Activated CD8-positive, alpha-beta T cell treated with anti-CD3 and anti-CD28 coated beads for 36 hours (primary cell): ENCODE measurements at regions of chr6 and their contacts with region 1.

Region 1: GRCh38 chr6:2931970-2932748 is 29.1 kb upstream of the SERPINB9 start:
- DNase-seq: peak; percentile 94
- ATAC-seq: peak; percentile 90
- H3K4me3 Mint-ChIP-seq: no peak overlapping the region
- H3K27ac Mint-ChIP-seq: peak overlapping the region; percentile 67
- H3K4me1 Mint-ChIP-seq: peaks cover 27% of the 10 kb centered on the region
- H3K27me3 Mint-ChIP-seq: no peaks in the 10 kb centered on the region
- CTCF ChIP-seq: peak; percentile 96

Region 2: DNA sequence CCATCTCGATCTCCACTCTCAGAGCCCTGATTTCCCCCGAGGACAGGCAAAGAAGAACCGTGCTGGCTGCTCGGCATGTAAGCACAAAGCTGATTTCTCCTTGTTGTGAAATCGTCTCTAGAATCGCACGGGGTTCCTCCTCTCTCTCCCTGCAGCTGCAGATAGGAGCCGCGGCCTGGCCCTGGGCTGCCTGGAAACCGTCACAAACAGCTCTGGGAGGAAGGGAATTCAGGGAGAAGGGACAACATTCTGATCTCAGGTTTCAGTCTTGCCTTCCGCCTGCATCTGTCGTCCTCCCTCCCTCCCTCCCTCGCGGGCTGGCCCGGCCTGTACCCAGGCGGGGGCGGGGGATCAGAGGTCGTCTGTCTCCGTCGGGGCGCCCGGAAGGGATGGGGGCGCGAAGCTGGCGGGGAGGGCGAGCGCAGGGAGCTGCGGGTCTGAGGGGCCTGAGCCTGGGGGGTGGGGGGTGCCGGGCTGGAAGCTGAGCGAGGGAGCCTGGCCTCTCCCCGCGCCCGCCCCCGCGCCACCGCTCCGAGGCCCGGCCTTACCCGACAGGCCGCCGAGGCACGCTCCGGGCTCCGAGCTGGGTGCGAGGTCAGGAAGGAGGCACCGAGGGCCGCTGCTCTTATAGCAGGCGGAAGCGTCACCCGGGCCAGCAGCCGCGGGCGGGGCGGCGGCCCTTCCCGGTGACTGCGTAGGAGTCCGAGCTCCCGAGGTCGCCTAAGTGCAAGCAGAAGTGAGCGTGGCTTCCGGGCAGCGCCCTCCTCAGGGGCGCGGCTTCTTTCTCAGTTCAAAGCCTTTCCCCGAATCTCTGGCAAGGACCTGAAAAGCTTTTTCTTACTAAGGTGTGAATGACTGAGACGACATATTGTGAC is 90.7 kb before region 1 on chr6 and contains the start of gene SERPINB1:
- CTCF ChIA-PET with region 1: interaction called, 180 read pairs
- POLR2A ChIA-PET with region 1: interaction called, 9 read pairs
- intact Hi-C with region 1: loop called (anchors 5 kb)
- DNase-seq: peak; percentile 95
- ATAC-seq: peak; percentile 90
- H3K4me3 Mint-ChIP-seq: peak within 1 kb of the TSS; percentile 85
- H3K27ac Mint-ChIP-seq: peak within 1 kb of the TSS; percentile 92
- H3K4me1 Mint-ChIP-seq: peaks cover 65% of the 10 kb centered on the region
- H3K27me3 Mint-ChIP-seq: no peaks in the 10 kb centered on the region
- CTCF ChIP-seq: no peak
- total RNA-seq, gene SERPINB1: 55.8 to 60.0 TPM

Region 3: DNA sequence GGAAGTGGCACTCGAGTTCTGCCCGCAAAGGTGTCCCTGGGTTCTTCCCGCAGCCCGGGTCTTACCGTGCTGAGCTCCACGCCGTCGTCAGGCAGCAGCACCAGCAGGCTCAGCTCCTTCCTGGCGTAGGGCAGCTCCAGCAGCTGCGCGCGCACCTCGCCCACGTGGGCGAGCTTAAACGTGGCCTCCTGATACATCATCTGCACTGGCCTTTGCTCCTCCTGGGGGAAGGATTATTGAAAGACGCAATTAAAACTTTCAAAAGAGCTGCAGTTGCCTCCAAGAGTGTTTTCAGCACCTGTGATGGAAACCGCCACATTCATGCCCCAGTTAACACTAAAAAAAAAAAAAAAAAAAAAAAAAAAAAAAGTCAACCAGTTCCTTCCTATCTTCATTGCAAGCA is 40.4 kb before region 1 on chr6:
- CTCF ChIA-PET with region 1: interaction called, 10 read pairs
- POLR2A ChIA-PET with region 1: interaction called, 3 read pairs
- intact Hi-C with region 1: no loop called
- DNase-seq: peak; percentile 87
- ATAC-seq: peak; percentile 92
- H3K4me3 Mint-ChIP-seq: peak overlapping the region; percentile 78
- H3K27ac Mint-ChIP-seq: peak overlapping the region; percentile 82
- H3K4me1 Mint-ChIP-seq: peaks cover 62% of the 10 kb centered on the region
- H3K27me3 Mint-ChIP-seq: no peaks in the 10 kb centered on the region
- CTCF ChIP-seq: no peak

Region 4: GRCh38 chr6:2900821-2901644 is 31.1 kb before region 1 on chr6:
- CTCF ChIA-PET with region 1: interaction called, 17 read pairs
- POLR2A ChIA-PET with region 1: interaction called, 7 read pairs
- intact Hi-C with region 1: no loop called
- DNase-seq: peak; percentile 22
- ATAC-seq: peak; percentile 7
- H3K4me3 Mint-ChIP-seq: peak overlapping the region; percentile 98
- H3K27ac Mint-ChIP-seq: peak overlapping the region; percentile 80
- H3K4me1 Mint-ChIP-seq: peaks cover 47% of the 10 kb centered on the region
- H3K27me3 Mint-ChIP-seq: no peaks in the 10 kb centered on the region
- CTCF ChIP-seq: no peak

Region 5: DNA sequence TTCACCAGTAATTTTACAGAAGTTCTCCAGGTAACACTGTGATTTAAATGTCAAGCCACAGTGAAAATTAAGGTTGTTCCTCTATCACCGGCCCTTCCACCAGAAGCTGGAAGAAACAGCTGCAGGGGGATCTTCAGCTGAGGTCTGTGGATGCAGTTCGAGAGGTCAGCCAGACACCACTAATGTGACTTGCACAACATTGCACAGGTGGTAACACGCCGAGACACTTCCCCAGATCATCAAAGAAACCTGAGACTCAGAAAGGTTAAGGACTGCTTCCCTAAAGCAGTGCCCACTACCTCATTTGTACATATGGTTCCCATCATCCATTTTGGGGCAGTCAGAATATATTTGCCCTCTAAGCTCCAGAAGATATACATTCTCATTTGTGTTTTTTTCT is 21.0 kb before region 1 on chr6:
- CTCF ChIA-PET with region 1: interaction called, 31 read pairs
- POLR2A ChIA-PET with region 1: interaction called, 4 read pairs
- intact Hi-C with region 1: no loop called
- DNase-seq: no peak
- ATAC-seq: no peak
- H3K4me3 Mint-ChIP-seq: no peak overlapping the region
- H3K27ac Mint-ChIP-seq: no peak overlapping the region
- H3K4me1 Mint-ChIP-seq: peaks cover 47% of the 10 kb centered on the region
- H3K27me3 Mint-ChIP-seq: no peaks in the 10 kb centered on the region
- CTCF ChIP-seq: no peak

Region 6: DNA sequence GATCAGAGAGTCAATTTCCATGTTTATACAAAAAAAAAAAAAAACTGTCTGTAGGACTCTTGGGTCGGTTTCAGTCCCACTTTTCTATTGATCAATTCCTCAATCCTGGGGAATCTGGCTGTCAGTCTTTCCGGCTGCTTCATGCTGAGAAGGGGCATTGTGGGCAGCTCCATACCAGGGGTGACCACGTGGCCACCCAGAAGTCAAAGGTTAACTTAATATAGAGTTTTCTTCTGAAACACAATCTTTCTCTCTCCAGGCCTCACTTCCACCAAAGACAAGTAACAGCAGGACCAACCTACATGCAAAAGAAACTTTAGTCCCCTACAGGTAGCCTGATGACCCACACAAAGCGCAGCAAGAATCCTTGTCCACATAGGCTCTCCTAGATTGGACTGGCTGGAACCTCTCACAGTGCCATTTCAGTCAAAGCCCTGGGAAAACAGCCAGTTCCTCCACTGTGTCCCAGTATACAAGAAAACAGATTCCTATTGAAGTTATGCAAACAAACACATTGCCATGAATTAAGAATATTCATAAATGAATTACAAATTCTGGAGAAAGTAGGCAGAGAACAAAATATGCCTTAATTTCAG is 10.5 kb before region 1 on chr6:
- CTCF ChIA-PET with region 1: interaction called, 23 read pairs
- POLR2A ChIA-PET with region 1: no interaction called
- intact Hi-C with region 1: no loop called
- DNase-seq: no peak
- ATAC-seq: no peak
- H3K4me3 Mint-ChIP-seq: no peak overlapping the region
- H3K27ac Mint-ChIP-seq: no peak overlapping the region
- H3K4me1 Mint-ChIP-seq: peaks cover 19% of the 10 kb centered on the region
- H3K27me3 Mint-ChIP-seq: no peaks in the 10 kb centered on the region
- CTCF ChIP-seq: no peak

Region 7: DNA sequence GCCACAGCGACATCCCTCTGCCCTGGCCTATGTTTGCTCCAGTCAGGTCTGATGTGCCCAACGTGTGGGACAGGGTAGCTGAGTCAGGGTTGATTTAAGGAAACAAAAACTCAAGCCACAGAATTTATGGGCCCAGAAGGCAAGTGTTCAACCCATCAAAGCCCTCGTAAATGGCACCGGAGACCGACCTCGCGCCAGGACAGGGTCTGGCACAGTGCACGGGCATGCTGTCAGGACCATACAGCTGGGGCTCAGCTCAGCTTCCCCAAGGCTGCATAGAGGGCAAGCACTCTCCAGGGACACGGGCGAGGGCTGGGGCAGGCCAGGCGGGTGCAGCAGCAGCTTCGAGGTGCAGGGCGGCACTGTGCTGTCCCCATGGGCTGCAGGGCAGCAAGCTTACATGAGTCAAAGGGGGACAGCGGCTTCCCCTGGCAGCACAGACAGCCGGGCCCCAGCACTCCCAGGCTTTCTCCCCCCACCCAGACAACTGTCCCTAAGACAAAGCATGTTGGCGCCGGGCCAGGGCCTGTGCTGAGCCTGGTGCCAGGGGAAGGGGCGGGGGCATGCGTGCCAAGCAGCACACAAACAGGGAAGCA is 352.2 kb after region 1 on chr6:
- CTCF ChIA-PET with region 1: no interaction called
- POLR2A ChIA-PET with region 1: no interaction called
- intact Hi-C with region 1: no loop called
- DNase-seq: no peak
- ATAC-seq: no peak
- H3K4me3 Mint-ChIP-seq: no peak overlapping the region
- H3K27ac Mint-ChIP-seq: no peak overlapping the region
- H3K4me1 Mint-ChIP-seq: peaks cover 3% of the 10 kb centered on the region
- H3K27me3 Mint-ChIP-seq: no peaks in the 10 kb centered on the region
- CTCF ChIP-seq: no peak